Heart left ventricle (tissue), 16 donors: ENCODE measurements at regions of chr3 and their contacts with region 1.

Region 1: GRCh38 chr3:143302638-143303171 is 183.1 kb downstream of the CHST2 start:
- DNase-seq: peak; percentile 56 to 85 (median 75)
- ATAC-seq: peak; percentile 60 to 93 (median 86)
- H3K4me3 ChIP-seq: no peak overlapping the region
- H3K27ac ChIP-seq: peak overlapping the region in 8 of 12 donors; percentile 35 to 58 (median 42)
- H3K4me1 ChIP-seq: peaks cover 4 to 43% (median 21%) of the 10 kb centered on the region in 12 donors
- H3K27me3 ChIP-seq: no peaks in the 10 kb centered on the region
- CTCF ChIP-seq: no peak
- POLR2A ChIP-seq: no peak

Region 2: DNA sequence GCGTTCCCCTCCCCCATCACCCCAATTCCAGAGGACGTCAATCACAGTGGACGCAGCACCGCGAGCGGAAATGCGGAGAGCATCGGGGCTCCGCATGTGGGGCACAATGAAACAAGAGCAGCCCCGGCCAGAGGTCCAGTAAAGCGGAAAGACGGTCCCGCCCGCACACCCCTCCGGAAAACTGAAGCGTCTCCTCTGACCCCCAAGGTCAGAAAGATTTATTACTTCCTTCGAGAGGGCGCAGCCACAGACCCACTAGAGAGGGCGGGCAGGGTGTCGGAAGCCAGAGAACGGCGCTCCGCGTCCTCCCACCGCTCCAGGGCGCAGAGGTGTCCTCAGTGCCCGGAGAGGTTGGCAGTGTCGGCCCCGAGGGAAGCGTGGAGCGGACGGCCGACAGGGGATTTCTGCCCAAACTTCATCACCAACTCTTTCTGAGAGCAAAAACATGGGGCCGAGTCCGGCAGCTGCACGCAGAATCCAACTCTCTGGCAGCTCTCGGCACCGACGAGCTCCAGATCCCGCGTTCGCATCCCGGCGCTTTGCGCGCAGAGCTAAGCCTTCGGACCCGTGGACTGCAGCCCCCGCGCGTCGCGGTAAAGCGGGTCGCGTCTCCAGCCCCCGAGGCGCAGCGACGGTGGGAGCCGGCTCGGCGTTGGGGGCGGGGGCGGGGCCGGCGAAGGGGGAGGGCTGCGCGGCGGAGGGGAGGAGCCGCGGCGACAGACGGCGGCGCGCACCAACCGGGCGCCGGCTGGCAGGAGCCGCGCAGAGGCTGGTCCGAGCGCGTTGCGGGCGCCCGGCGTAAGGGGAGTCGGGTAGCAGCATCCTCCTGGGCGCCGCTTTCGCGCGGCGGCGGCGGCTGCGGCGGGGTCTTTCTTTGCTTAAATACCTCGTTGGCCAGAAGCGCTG is 183.4 kb before region 1 on chr3 and contains the start of gene CHST2:
- intact Hi-C with region 1: loop called in 2 of 10 experiments (anchors 10 kb)
- DNase-seq: peak; percentile 73 to 87 (median 75)
- ATAC-seq: peak; percentile 66 to 98 (median 94)
- H3K4me3 ChIP-seq: peak within 1 kb of the TSS; percentile 51 to 91 (median 72)
- H3K27ac ChIP-seq: peak within 1 kb of the TSS in 11 of 12 donors; percentile 43 to 82 (median 60)
- H3K4me1 ChIP-seq: peaks cover 0 to 37% (median 2%) of the 10 kb centered on the region in 12 donors
- H3K27me3 ChIP-seq: peaks cover 0 to 33% (median 9%) of the 10 kb centered on the region in 9 donors
- CTCF ChIP-seq: no peak
- POLR2A ChIP-seq: peak in 1 of 2 donors; percentile 51
- total RNA-seq, gene CHST2: 1.3 to 8.7 (median 2.4) TPM

Region 3: GRCh38 chr3:143135150-143135549 is 167.6 kb before region 1 on chr3:
- intact Hi-C with region 1: loop called in 1 of 10 experiments (anchors 10 kb)
- DNase-seq: no peak
- ATAC-seq: peak in 3 of 4 donors; percentile 48 to 65 (median 54)
- H3K4me3 ChIP-seq: no peak overlapping the region
- H3K27ac ChIP-seq: peak overlapping the region in 1 of 12 donors; percentile 12
- H3K4me1 ChIP-seq: peaks cover 0 to 20% (median 4%) of the 10 kb centered on the region in 12 donors
- H3K27me3 ChIP-seq: no peaks in the 10 kb centered on the region
- CTCF ChIP-seq: no peak
- POLR2A ChIP-seq: no peak

Region 4: DNA sequence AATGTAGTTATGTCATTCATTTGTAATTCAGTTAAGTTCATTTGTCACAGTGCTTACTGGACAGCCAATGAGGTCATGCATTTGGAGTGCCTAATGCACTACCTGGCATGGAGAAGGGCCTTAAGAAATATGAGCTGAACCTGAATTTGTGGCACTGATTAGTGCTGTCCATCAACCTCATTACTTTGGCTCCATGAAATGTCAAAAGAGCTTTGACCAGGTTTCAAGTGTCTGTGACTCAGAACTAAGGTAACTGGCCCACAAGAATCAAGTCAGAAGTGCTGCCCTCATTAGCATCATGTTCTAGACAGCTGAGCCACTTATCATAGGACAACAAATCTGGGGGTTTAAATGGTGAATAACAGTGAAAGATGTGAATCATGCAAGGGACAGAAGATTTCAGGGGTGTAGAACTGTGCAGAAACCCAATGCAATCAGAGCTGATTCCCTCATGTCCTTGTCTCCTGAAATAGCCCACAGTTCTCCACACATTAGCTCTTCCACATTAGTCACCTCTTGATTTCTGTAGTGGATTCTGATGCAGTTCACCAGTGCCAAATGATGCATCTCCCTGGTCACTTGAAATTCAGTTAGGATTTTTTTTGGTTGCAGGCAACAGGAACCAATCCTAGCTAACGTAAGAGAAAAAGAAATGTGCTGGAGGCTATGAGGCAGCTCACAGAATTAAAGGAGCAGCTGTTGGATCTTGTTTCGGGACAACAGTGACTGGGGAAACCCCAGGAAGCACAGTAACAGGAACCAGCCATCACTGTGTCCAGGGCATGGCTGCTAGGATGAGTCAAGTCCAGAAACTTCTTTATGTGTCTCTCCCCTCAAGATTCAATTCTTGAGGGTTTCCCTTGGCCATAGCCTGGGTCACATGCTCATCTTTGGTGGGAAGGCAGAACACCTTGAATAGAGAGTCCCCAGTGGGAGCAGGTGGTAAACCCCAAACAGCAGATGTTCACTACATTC is 144.4 kb before region 1 on chr3:
- intact Hi-C with region 1: loop called in 1 of 10 experiments (anchors 10 kb)
- DNase-seq: no peak
- ATAC-seq: peak in 2 of 4 donors; percentile 18 to 93
- H3K4me3 ChIP-seq: no peak overlapping the region
- H3K27ac ChIP-seq: peak overlapping the region in 1 of 12 donors; percentile 29
- H3K4me1 ChIP-seq: peaks cover 0 to 13% (median 0%) of the 10 kb centered on the region in 12 donors
- H3K27me3 ChIP-seq: peaks cover 0 to 3% (median 0%) of the 10 kb centered on the region in 9 donors
- CTCF ChIP-seq: no peak
- POLR2A ChIP-seq: no peak

Region 5: GRCh38 chr3:144119633-144120032 is 816.9 kb after region 1 on chr3:
- intact Hi-C with region 1: no loop called
- DNase-seq: no peak
- ATAC-seq: no peak
- H3K4me3 ChIP-seq: no peak overlapping the region
- H3K27ac ChIP-seq: no peak overlapping the region
- H3K4me1 ChIP-seq: no peaks in the 10 kb centered on the region
- H3K27me3 ChIP-seq: no peaks in the 10 kb centered on the region
- CTCF ChIP-seq: no peak
- POLR2A ChIP-seq: no peak